CD4-positive, alpha-beta memory T cell (primary cell): ENCODE measurements at regions of chr10 and their contacts with region 1.

Region 1: GRCh38 chr10:119725828-119726675 is at the start of gene INPP5F:
- DNase-seq: peak; percentile 96 to 98 (median 97)
- H3K4me3 ChIP-seq: peak within 1 kb of the TSS; percentile 62 to 74
- H3K4me3 Mint-ChIP-seq: peak within 1 kb of the TSS; percentile 90 to 96 (median 92)
- H3K27ac ChIP-seq: peak within 1 kb of the TSS; percentile 53
- H3K27ac Mint-ChIP-seq: peak within 1 kb of the TSS; percentile 74 to 92 (median 91)
- H3K4me1 ChIP-seq: peaks cover 34% of the 10 kb centered on the region
- H3K4me1 Mint-ChIP-seq: peaks cover 27 to 37% (median 31%) of the 10 kb centered on the region in 4 donors
- H3K27me3 ChIP-seq: no peaks in the 10 kb centered on the region
- H3K27me3 Mint-ChIP-seq: no peaks in the 10 kb centered on the region
- total RNA-seq, gene INPP5F: 10.6 to 10.9 TPM

Region 2: DNA sequence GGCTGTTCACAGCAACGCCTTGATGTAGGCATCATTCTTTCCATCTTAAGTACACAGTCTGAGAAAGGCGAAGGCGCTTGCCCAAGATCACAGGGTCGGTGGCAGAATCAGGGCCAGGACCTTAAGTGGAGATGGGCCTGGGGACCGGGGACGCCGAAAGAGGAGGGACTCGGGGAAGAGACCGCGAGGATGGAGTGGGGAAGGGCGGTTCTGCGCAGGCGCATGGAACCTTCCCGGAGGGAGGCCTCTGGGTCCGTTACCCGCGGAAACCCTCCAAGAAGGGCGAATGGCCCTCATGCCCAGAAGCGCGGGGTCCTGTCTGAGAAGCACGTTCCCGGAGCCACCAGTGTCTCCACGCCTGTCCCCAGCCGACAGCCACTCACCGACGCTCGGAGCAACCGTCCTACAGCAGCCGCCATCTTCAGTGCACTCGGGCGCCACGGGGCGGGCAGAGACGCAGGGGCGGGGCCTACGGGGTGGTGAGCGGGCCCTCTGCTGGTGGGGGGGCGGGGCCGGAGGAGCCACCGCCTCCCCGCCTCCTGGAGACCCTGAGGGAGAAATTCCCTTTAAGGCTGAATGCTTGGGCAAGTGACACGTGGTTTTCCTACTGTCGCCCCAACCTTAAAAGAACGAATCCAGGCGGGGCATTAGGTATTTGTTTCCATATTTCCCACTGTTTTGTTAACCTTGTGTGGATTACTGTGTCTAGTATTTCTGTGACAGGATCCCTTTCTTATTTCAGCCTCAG is 547.5 kb before region 1 on chr10 and contains the start of gene PRDX3:
- CTCF ChIA-PET with region 1: no interaction called
- POLR2A ChIA-PET with region 1: no interaction called
- intact Hi-C with region 1: loop called (anchors 2 kb)
- DNase-seq: peak; percentile 89 to 92 (median 89)
- H3K4me3 ChIP-seq: peak within 1 kb of the TSS; percentile 96 to 100
- H3K4me3 Mint-ChIP-seq: peak within 1 kb of the TSS; percentile 89 to 99 (median 96)
- H3K27ac ChIP-seq: peak within 1 kb of the TSS; percentile 81
- H3K27ac Mint-ChIP-seq: peak within 1 kb of the TSS; percentile 85 to 98 (median 96)
- H3K4me1 ChIP-seq: peaks cover 44% of the 10 kb centered on the region
- H3K4me1 Mint-ChIP-seq: peaks cover 16 to 51% (median 34%) of the 10 kb centered on the region in 4 donors
- H3K27me3 ChIP-seq: no peaks in the 10 kb centered on the region
- H3K27me3 Mint-ChIP-seq: no peaks in the 10 kb centered on the region
- total RNA-seq, gene PRDX3: 34.3 to 38.2 TPM

Region 3: DNA sequence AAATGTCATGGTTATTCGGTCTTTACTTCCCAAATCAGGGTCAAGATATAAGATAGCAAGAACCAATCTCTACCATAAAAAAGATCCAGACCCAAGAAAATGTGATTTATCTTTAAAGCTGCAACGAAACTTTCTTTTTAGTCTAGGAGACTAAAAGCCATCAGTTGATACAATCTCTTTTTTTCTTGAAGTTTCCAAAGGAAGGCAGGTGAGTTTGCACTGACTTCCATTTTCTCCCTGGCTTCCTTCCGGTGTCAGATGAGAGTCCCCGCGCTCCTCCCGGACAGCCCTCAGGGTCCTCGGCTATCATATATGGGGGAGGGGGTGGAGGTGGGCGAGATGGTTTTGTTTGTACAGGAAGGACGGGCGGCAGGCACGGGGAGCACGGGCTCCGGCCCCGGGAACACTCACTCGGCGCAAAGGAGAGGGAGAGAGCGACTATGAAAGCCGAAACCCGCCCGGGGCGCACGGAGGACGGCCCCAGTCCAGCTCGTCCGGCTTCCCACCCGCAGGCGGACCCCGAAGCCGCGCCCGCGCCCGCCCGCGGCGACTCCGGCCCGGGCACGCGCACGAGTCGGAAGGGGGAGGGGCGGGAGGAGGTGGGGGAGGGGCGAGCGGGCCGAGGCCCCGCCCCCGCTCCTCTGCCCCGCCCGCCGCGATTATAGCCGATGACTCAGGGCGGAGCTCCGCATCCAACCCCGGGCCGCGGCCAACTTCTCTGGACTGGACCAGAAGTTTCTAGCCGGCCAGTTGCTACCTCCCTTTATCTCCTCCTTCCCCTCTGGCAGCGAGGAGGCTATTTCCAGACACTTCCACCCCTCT is 75.1 kb before region 1 on chr10 and contains the start of gene BAG3:
- CTCF ChIA-PET with region 1: no interaction called
- POLR2A ChIA-PET with region 1: interaction called, 22 read pairs
- intact Hi-C with region 1: loop called (anchors 1 kb)
- DNase-seq: peak; percentile 66 to 80 (median 68)
- H3K4me3 ChIP-seq: peak within 1 kb of the TSS; percentile 88 to 89
- H3K4me3 Mint-ChIP-seq: peak within 1 kb of the TSS; percentile 94 to 100 (median 96)
- H3K27ac ChIP-seq: peak within 1 kb of the TSS; percentile 87
- H3K27ac Mint-ChIP-seq: peak within 1 kb of the TSS; percentile 96 to 99 (median 96)
- H3K4me1 ChIP-seq: peaks cover 45% of the 10 kb centered on the region
- H3K4me1 Mint-ChIP-seq: peaks cover 36 to 45% (median 43%) of the 10 kb centered on the region in 4 donors
- H3K27me3 ChIP-seq: no peaks in the 10 kb centered on the region
- H3K27me3 Mint-ChIP-seq: peaks cover 0 to under 1% of the 10 kb centered on the region in 2 donors
- total RNA-seq, gene BAG3: 20.8 to 21.6 TPM

Region 4: GRCh38 chr10:119686439-119687191 is 39.4 kb before region 1 on chr10:
- CTCF ChIA-PET with region 1: interaction called, 13 read pairs
- POLR2A ChIA-PET with region 1: interaction called, 6 read pairs
- intact Hi-C with region 1: loop called (anchors 1 kb)
- DNase-seq: peak; percentile 76 to 85 (median 78)
- H3K4me3 ChIP-seq: peak overlapping the region in 1 of 2 donors; percentile 60
- H3K4me3 Mint-ChIP-seq: peak overlapping the region; percentile 70 to 84 (median 79)
- H3K27ac ChIP-seq: no peak overlapping the region
- H3K27ac Mint-ChIP-seq: peak overlapping the region; percentile 51 to 84 (median 77)
- H3K4me1 ChIP-seq: peaks cover 19% of the 10 kb centered on the region
- H3K4me1 Mint-ChIP-seq: peaks cover 7 to 22% (median 16%) of the 10 kb centered on the region in 4 donors
- H3K27me3 ChIP-seq: no peaks in the 10 kb centered on the region
- H3K27me3 Mint-ChIP-seq: peaks cover 1% of the 10 kb centered on the region in 2 donors

Region 5: DNA sequence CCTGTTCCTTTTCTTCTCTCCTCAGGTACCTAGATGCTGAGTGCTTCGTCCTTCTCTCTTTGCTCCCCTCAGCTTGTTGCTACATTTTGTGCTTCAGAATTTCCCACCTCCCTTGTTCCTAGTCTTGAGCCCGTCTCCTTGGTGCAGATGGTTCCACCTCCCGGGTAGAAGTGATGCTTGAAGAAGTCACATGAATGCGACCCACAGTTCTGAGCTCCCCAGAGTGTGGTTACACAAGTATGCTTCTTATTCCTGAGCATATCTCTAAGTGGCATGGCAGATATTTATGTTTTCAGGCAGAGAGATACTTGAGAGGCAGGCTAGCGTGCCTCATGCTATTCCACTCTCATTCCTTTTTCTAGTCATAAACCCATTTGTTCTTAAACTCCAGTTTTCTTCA is 33.8 kb after region 1 on chr10:
- CTCF ChIA-PET with region 1: no interaction called
- POLR2A ChIA-PET with region 1: no interaction called
- intact Hi-C with region 1: no loop called
- DNase-seq: no peak
- H3K4me3 ChIP-seq: no peak overlapping the region
- H3K4me3 Mint-ChIP-seq: no peak overlapping the region
- H3K27ac ChIP-seq: no peak overlapping the region
- H3K27ac Mint-ChIP-seq: peak overlapping the region in 1 of 7 donors; percentile 20
- H3K4me1 ChIP-seq: no peaks in the 10 kb centered on the region
- H3K4me1 Mint-ChIP-seq: peaks cover 0 to 5% (median 0%) of the 10 kb centered on the region in 4 donors
- H3K27me3 ChIP-seq: no peaks in the 10 kb centered on the region
- H3K27me3 Mint-ChIP-seq: no peaks in the 10 kb centered on the region

Region 6: GRCh38 chr10:119769886-119770285 is 43.8 kb after region 1 on chr10:
- CTCF ChIA-PET with region 1: no interaction called
- POLR2A ChIA-PET with region 1: no interaction called
- intact Hi-C with region 1: no loop called
- DNase-seq: no peak
- H3K4me3 ChIP-seq: no peak overlapping the region
- H3K4me3 Mint-ChIP-seq: no peak overlapping the region
- H3K27ac ChIP-seq: no peak overlapping the region
- H3K27ac Mint-ChIP-seq: peak overlapping the region in 2 of 7 donors; percentile 24 to 82
- H3K4me1 ChIP-seq: no peaks in the 10 kb centered on the region
- H3K4me1 Mint-ChIP-seq: peaks cover 5 to 13% (median 10%) of the 10 kb centered on the region in 4 donors
- H3K27me3 ChIP-seq: no peaks in the 10 kb centered on the region
- H3K27me3 Mint-ChIP-seq: no peaks in the 10 kb centered on the region

Region 7: DNA sequence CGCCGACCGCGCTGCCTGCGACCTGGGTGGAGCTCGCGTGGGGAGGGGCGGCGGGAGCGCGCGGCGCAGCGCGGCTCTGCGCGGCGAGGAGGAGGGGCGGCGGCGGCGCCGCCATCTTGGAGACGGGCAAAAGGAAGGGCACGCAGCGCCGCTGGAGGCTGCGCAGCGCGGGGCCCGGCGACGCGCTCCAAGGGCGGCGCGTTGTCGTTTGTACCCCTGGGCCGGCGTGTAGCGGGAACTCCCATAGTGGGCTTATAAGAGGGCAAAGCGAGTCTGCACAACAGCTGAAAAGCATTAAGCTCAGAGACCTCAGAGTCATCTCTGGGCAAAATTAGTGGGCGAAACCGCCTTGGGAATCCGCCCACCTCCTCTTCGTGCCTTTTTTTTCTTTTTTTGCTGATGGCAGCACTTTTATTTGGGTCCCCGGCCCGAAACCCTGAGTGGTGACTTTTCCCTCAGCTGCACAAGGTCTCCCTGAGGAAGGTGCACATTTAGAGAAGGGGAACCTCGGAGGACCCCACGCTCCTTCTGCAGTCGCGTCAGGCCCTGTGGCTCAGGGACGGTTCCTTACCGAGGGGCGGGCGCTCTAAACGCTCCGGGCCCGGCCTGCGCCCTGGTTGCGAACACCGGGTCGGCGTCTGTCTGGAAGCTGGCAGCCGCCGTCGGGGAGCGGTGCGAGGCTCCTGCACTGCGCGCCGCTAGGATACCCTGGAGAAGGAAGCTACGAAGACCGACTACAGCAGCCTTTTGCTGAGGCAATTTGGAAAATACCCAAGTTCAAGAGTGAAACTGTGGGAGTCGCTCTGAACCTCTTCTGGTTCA is 147.0 kb after region 1 on chr10:
- CTCF ChIA-PET with region 1: interaction called, 3 read pairs
- POLR2A ChIA-PET with region 1: interaction called, 36 read pairs
- intact Hi-C with region 1: loop called (anchors 1 kb)
- DNase-seq: peak; percentile 87 to 89 (median 88)
- H3K4me3 ChIP-seq: peak overlapping the region; percentile 76 to 90
- H3K4me3 Mint-ChIP-seq: peak overlapping the region; percentile 86 to 92 (median 89)
- H3K27ac ChIP-seq: peak overlapping the region; percentile 85
- H3K27ac Mint-ChIP-seq: peak overlapping the region; percentile 91 to 96 (median 94)
- H3K4me1 ChIP-seq: peaks cover 46% of the 10 kb centered on the region
- H3K4me1 Mint-ChIP-seq: peaks cover 26 to 46% (median 37%) of the 10 kb centered on the region in 4 donors
- H3K27me3 ChIP-seq: no peaks in the 10 kb centered on the region
- H3K27me3 Mint-ChIP-seq: no peaks in the 10 kb centered on the region